CD8-positive, alpha-beta T cell (primary cell): ENCODE measurements at regions of chr10 and their contacts with region 1.

Region 1: DNA sequence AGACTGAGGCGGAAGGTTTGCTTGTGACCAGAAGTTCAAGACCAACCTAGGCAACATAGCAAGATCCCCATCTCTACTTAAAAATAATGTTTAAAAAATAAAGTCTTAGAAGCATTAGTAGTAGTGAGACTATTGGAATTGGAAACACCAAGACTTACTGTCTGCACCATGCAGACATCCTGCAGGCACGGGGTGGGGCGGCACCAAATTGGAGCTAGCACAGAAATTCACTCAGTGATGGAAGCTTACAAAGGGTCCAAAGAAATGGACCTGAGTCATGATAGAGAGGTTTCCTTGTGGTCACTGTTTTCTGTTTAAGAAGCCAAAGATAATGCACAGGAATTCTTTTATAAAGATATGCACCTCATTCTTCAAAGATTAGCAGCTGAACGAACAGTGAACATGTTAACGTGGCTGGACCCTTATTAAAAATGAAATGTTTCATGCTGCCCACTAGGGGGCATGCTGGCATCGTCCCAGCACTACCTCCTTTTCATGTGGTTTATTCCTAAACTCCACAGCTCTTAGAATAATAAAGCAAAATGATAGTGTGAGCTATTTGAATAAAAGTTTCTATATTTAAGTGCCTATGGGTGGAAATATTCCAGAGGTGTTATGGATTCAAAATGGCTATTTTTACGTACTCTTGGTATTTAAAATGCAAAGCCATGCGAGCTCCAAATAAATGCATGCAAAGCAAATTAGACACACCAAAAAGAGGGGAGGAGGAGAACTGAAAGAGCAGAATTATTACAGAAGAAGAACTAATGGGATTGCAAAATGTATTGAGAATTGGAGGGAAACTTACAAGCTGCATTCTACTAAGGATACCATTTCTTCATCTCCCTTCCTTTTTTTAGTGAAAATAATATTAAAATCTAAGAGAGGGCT is 28.6 kb downstream of the PDSS1 start:
- DNase-seq: peak in 8 of 9 experiments; percentile 26 to 77 (median 48)
- ATAC-seq: peak; percentile 47
- H3K4me3 ChIP-seq: no peak overlapping the region
- H3K4me3 Mint-ChIP-seq: no peak overlapping the region
- H3K27ac ChIP-seq: no peak overlapping the region
- H3K27ac Mint-ChIP-seq: no peak overlapping the region
- H3K4me1 ChIP-seq: peaks cover 5% of the 10 kb centered on the region
- H3K4me1 Mint-ChIP-seq: peaks cover 12% of the 10 kb centered on the region
- H3K27me3 ChIP-seq: no peaks in the 10 kb centered on the region
- H3K27me3 Mint-ChIP-seq: no peaks in the 10 kb centered on the region
- CTCF ChIP-seq: peak; percentile 99

Region 2: DNA sequence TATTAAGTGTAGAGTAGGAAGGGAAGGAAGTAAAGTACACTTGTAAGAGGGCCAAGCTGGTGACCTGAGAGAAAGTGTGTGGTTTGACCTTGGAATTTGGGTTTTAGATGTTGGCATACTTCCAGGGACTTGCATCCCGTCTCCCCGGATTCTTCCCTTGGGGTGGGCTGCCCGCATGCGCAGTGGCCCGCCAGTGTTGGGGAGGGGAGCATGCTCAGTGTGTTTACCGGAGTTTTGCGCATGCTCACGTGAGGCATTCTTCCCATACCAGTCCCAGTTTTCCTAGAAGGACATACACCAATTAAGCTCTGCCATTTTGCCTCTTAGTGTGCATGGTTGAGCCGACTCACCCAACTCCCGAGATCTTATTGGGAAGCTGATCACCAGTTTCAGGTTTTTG is 19.1 kb before region 1 on chr10:
- CTCF ChIA-PET with region 1: interaction called, 16 read pairs
- POLR2A ChIA-PET with region 1: no interaction called
- intact Hi-C with region 1: no loop called
- DNase-seq: no peak
- ATAC-seq: no peak
- H3K4me3 ChIP-seq: no peak overlapping the region
- H3K4me3 Mint-ChIP-seq: no peak overlapping the region
- H3K27ac ChIP-seq: no peak overlapping the region
- H3K27ac Mint-ChIP-seq: no peak overlapping the region
- H3K4me1 ChIP-seq: no peaks in the 10 kb centered on the region
- H3K4me1 Mint-ChIP-seq: peaks cover 6% of the 10 kb centered on the region
- H3K27me3 ChIP-seq: no peaks in the 10 kb centered on the region
- H3K27me3 Mint-ChIP-seq: no peaks in the 10 kb centered on the region
- CTCF ChIP-seq: no peak

Region 3: GRCh38 chr10:26846719-26847118 is 120.6 kb after region 1 on chr10:
- CTCF ChIA-PET with region 1: no interaction called
- POLR2A ChIA-PET with region 1: no interaction called
- intact Hi-C with region 1: no loop called
- DNase-seq: no peak
- ATAC-seq: no peak
- H3K4me3 ChIP-seq: no peak overlapping the region
- H3K4me3 Mint-ChIP-seq: peak overlapping the region; percentile 0
- H3K27ac ChIP-seq: no peak overlapping the region
- H3K27ac Mint-ChIP-seq: peak overlapping the region; percentile 25
- H3K4me1 ChIP-seq: peaks cover 39% of the 10 kb centered on the region
- H3K4me1 Mint-ChIP-seq: peaks cover 69% of the 10 kb centered on the region
- H3K27me3 ChIP-seq: no peaks in the 10 kb centered on the region
- H3K27me3 Mint-ChIP-seq: no peaks in the 10 kb centered on the region
- CTCF ChIP-seq: no peak

Region 4: DNA sequence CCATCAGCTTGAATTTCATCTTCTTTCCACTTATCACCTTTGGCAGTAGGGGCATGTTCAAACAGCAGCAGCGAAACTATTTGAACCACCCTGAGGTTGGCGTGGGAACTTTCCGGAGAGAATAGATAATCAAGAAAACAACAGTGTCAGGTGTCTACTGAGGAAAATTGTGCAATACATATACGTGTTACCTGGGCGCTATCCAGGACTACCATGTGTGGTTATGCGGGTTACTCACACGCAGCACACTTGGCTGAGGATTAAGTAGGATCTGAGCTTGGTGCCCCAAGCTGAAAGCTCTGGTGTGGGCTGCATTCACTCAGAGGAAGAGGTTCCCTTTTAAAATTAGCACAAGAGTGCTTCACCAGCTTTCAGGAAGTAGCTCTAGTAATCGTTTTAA is 143.4 kb after region 1 on chr10:
- CTCF ChIA-PET with region 1: interaction called, 10 read pairs
- POLR2A ChIA-PET with region 1: no interaction called
- intact Hi-C with region 1: loop called in 1 of 2 experiments (anchors 5 kb)
- DNase-seq: peak in 2 of 9 experiments; percentile 14 to 33
- ATAC-seq: peak; percentile 26
- H3K4me3 ChIP-seq: no peak overlapping the region
- H3K4me3 Mint-ChIP-seq: peak overlapping the region; percentile 9
- H3K27ac ChIP-seq: no peak overlapping the region
- H3K27ac Mint-ChIP-seq: no peak overlapping the region
- H3K4me1 ChIP-seq: no peaks in the 10 kb centered on the region
- H3K4me1 Mint-ChIP-seq: peaks cover 6% of the 10 kb centered on the region
- H3K27me3 ChIP-seq: no peaks in the 10 kb centered on the region
- H3K27me3 Mint-ChIP-seq: no peaks in the 10 kb centered on the region
- CTCF ChIP-seq: no peak

Region 5: GRCh38 chr10:26890956-26891355 is 164.9 kb after region 1 on chr10:
- CTCF ChIA-PET with region 1: interaction called, 17 read pairs
- POLR2A ChIA-PET with region 1: no interaction called
- intact Hi-C with region 1: no loop called
- DNase-seq: peak in 5 of 9 experiments; percentile 11 to 51 (median 42)
- ATAC-seq: no peak
- H3K4me3 ChIP-seq: no peak overlapping the region
- H3K4me3 Mint-ChIP-seq: no peak overlapping the region
- H3K27ac ChIP-seq: no peak overlapping the region
- H3K27ac Mint-ChIP-seq: no peak overlapping the region
- H3K4me1 ChIP-seq: no peaks in the 10 kb centered on the region
- H3K4me1 Mint-ChIP-seq: no peaks in the 10 kb centered on the region
- H3K27me3 ChIP-seq: no peaks in the 10 kb centered on the region
- H3K27me3 Mint-ChIP-seq: peaks cover under 1% of the 10 kb centered on the region
- CTCF ChIP-seq: no peak

Region 6: DNA sequence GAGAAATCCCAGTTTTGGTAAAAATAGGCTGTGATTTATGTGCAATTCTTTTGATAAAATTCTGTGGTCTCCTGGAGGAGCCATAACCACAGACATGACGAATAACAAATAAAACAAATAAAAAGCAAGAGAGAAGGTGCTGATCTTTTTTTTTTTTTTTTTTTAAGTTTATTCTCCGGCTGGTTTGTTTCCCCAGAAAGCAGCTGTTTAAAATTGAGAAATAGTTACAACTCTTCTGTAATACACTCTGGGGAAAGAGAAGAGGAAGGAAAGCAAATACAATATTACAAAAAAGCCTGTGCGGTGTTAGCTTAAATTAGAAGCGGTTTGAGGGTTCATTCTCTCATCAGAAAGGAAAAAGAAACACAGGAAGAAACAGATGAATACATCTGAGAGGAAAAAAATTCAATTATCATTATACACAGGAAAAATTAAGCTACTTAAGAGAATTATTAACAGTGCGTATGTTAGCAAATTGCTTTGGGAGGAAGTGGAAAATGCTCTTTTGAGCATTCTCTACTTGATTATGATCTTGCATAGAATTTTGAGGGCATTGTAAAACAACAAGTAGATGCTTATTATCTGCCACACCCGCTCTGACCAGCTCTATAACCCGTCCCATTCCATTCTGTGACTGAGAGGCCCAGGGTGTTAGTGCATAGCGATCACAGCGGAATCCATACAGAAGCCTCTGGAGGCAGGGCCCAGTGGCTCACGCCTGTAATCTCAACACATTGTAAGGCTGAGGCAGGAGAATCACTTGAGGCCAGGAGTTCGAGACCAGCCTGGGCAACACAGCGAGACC is 1766.2 kb after region 1 on chr10:
- CTCF ChIA-PET with region 1: no interaction called
- POLR2A ChIA-PET with region 1: no interaction called
- intact Hi-C with region 1: no loop called
- DNase-seq: no peak
- ATAC-seq: no peak
- H3K4me3 ChIP-seq: no peak overlapping the region
- H3K4me3 Mint-ChIP-seq: no peak overlapping the region
- H3K27ac ChIP-seq: no peak overlapping the region
- H3K27ac Mint-ChIP-seq: no peak overlapping the region
- H3K4me1 ChIP-seq: no peaks in the 10 kb centered on the region
- H3K4me1 Mint-ChIP-seq: peaks cover 1% of the 10 kb centered on the region
- H3K27me3 ChIP-seq: peaks cover 0 to 3% of the 10 kb centered on the region in 2 experiments
- H3K27me3 Mint-ChIP-seq: peaks cover 12% of the 10 kb centered on the region
- CTCF ChIP-seq: no peak